ENCODE measurements at regions of chr2 and their contacts with region 1.

Region 1: DNA sequence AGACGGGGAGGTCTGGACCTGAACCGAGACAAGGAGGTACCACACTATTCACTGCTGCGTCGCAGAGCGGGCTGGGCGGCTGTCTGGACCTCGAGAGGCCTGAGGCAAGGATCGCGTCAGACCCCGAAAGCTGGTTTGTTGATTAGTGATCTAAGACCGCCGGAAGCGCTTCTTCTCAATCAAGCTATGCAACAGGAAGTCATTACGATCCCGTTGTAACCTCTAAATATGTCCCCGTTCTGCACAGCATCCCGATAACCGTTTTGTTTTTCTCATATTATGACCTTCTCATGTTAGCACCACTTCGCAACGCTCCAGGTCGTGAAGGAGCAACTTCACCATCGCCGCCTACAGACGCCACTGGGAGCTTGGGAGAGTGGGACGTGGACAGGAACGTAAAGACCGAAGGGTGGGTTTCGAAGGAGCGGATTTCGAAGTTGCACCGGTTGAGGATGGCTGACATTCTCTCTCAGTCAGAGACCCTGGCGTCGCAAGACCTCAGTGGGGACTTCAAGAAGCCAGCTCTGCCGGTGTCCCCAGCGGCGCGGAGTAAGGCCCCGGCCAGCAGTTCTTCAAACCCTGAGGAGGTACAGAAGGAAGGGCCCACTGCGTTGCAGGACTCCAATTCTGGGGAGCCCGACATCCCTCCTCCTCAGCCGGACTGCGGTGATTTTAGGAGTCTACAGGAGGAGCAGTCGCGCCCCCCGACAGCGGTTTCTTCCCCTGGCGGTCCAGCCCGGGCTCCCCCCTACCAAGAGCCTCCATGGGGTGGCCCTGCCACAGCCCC is at the starts of genes SLC4A1AP and SUPT7L:
- DNase-seq: peak; percentile 77
- ATAC-seq: peak; percentile 90
- H3K4me3 ChIP-seq: peak within 1 kb of the TSS; percentile 90
- H3K27ac ChIP-seq: peak within 1 kb of the TSS; percentile 80
- H3K4me1 ChIP-seq: peaks cover 10% of the 10 kb centered on the region
- H3K27me3 ChIP-seq: no peaks in the 10 kb centered on the region
- CTCF ChIP-seq: no peak
- EP300 ChIP-seq: peak in 1 of 2 experiments; percentile 40; a peak in 1 of 4 replicates
- POLR2A ChIP-seq: peak; percentile 90
- RAD21 ChIP-seq: no peak
- polyA plus RNA-seq, gene SLC4A1AP: 6.5 to 16.4 TPM
- polyA plus RNA-seq, gene SUPT7L: 10.2 to 13.3 TPM

Region 2: DNA sequence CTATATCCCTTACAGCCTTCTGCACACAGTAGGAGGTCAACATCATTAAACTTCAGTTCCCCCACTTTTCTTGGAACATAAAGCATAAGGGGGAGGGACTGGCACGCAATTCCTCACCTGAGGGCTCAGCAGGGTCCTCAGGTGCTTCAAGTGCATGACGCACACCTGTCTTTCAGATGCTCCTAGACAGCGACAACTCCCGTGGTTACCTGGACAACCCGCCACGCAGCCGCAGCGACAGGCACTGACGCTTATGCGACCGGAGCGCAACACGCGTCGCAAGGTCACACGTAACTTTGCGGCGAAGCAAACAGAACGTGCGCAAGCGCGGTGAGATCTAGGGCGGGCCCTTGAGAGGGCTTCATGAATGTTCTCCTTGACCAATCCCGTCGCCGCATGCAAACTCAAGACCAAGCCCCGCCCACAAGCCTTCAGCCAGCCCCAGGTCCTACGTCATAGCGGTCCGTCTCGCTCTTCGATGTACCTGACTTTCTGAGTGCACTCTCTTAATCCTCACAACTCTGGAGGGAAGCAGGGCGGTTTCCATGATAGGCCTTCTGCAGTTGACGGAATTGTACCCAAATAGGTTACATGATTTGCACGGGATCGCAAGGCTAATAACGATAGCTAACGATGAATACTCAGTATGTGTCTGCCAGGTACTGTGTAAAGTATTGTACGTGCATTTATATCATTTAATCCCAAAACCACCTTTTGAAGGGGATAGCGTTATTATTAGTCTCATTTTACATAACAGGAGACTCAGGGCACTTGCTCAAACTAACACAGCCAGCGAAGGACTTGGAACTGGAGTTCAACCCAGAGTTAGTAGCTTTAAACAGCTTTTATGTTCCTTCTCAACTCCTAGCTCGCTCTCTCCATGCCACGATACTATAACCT is 173.9 kb before region 1 on chr2 and contains the start of gene IFT172:
- CTCF ChIA-PET with region 1: no interaction called
- POLR2A ChIA-PET with region 1: no interaction called
- RAD21 ChIA-PET with region 1: no interaction called
- SMC1A ChIA-PET with region 1: no interaction called
- in situ Hi-C with region 1: no loop called
- intact Hi-C with region 1: loop called (anchors 10 kb)
- DNase-seq: peak; percentile 95
- ATAC-seq: peak; percentile 97
- H3K4me3 ChIP-seq: peak within 1 kb of the TSS; percentile 65
- H3K27ac ChIP-seq: no peak within 1 kb of the TSS
- H3K4me1 ChIP-seq: peaks cover 3% of the 10 kb centered on the region; the same call in 1 of the 2 replicates
- H3K27me3 ChIP-seq: peaks cover 4 to 6% of the 10 kb centered on the region in 2 experiments; a peak in 2 of 4 replicates
- CTCF ChIP-seq: no peak
- EP300 ChIP-seq: no peak
- POLR2A ChIP-seq: peak; percentile 65
- RAD21 ChIP-seq: no peak
- polyA plus RNA-seq, gene IFT172: 3.0 to 3.4 TPM

Region 3: DNA sequence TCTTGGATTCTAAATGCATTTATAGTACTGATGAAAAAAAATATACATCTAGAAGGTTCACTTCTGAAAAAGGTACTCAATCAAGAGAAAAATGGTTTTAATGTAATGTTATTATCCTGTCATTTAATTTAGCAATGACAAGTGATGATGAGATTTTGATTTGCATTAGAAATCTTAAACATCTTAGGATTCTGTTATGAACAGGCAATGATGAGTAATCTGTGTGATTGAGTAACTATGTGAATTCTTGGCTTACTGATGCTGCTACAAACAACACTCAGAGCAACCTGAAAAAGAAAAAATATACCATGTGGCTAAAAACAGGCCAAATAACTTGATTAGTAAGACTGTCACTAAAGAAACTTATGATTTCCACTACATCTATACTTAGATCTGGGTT is 196.5 kb after region 1 on chr2:
- CTCF ChIA-PET with region 1: no interaction called
- POLR2A ChIA-PET with region 1: no interaction called
- RAD21 ChIA-PET with region 1: no interaction called
- SMC1A ChIA-PET with region 1: no interaction called
- in situ Hi-C with region 1: no loop called
- intact Hi-C with region 1: no loop called
- DNase-seq: no peak
- ATAC-seq: no peak
- H3K4me3 ChIP-seq: no peak overlapping the region
- H3K27ac ChIP-seq: no peak overlapping the region
- H3K4me1 ChIP-seq: no peaks in the 10 kb centered on the region
- H3K27me3 ChIP-seq: no peaks in the 10 kb centered on the region
- CTCF ChIP-seq: no peak
- EP300 ChIP-seq: no peak
- POLR2A ChIP-seq: no peak
- RAD21 ChIP-seq: no peak

Measured in GM12878 (cell line).